ENCODE measurements at regions of chr6 and their contacts with region 1.

Region 1: GRCh38 chr6:97394160-97394748 is 111.2 kb upstream of the MMS22L start:
- DNase-seq: peak; percentile 65
- H3K4me3 ChIP-seq: no peak overlapping the region
- H3K27ac ChIP-seq: no peak overlapping the region
- H3K4me1 ChIP-seq: no peaks in the 10 kb centered on the region
- H3K27me3 ChIP-seq: no peaks in the 10 kb centered on the region
- CTCF ChIP-seq: peak; percentile 90

Region 2: GRCh38 chr6:97068211-97068610 is 326.0 kb before region 1 on chr6:
- intact Hi-C with region 1: loop called (anchors 5 kb)
- DNase-seq: no peak
- H3K4me3 ChIP-seq: no peak overlapping the region
- H3K27ac ChIP-seq: no peak overlapping the region
- H3K4me1 ChIP-seq: no peaks in the 10 kb centered on the region
- H3K27me3 ChIP-seq: no peaks in the 10 kb centered on the region
- CTCF ChIP-seq: peak; percentile 30

Region 3: DNA sequence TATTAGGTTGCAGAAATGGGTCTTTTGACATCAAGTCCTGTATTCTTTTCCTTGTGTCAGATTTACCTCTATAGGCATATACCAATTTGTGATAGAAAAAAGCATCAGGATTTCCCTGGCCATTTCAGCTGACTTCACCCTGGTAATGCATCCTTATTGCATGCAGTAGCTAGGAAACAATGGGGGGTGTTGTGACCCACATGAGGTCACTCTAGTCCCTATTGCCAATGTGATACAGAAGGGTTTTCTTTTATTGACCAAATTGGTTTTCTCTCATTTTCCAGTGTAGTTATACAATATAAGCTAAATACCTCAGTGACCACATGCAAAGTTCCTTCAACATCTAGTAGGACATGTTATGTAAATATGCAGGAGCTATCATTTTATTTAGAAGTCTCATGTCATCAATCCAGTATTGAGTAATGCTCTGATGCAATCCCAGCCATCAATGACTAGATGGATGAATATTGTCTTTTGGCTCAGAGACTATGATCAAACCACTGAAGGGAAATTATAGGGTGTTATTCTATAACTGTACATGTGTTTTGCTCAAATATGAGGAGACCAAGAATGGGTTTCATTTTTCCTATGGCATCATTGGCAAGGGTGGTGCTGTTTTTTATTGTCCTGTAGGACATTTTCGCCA is 292.0 kb before region 1 on chr6:
- intact Hi-C with region 1: no loop called
- DNase-seq: no peak
- H3K4me3 ChIP-seq: no peak overlapping the region
- H3K27ac ChIP-seq: no peak overlapping the region
- H3K4me1 ChIP-seq: no peaks in the 10 kb centered on the region
- H3K27me3 ChIP-seq: no peaks in the 10 kb centered on the region
- CTCF ChIP-seq: no peak

Region 4: DNA sequence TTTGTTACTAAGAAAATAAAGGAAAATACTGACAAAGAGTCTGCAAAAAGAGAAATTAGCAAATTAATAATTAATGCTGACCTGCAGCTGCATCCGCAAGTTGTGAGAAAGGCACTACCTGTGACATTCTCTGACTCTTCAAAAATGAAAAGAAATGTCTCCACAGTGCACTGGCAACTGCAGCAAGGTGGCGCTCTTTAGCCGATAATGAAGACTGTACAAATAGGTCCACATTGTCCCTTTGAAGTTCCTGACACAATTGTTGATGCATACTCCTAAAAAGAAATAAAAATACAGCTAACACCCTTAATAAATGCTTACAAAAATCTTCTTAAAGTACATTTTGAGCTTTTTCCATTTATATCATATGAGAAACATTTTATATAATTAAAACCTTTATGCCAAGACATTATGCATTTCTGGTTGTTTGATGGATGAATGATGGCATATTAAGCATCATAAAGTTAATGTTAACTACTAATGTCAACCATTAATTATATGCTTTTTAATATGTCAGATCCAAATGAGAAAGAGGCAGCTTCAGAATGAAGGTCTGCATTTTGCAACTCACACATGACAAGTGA is 207.7 kb before region 1 on chr6:
- intact Hi-C with region 1: loop called (anchors 2 kb)
- DNase-seq: peak; percentile 74
- H3K4me3 ChIP-seq: no peak overlapping the region
- H3K27ac ChIP-seq: no peak overlapping the region
- H3K4me1 ChIP-seq: no peaks in the 10 kb centered on the region
- H3K27me3 ChIP-seq: no peaks in the 10 kb centered on the region
- CTCF ChIP-seq: peak; percentile 86